Gastrocnemius medialis (tissue), 4 donors: ENCODE measurements at regions of chr6 and their contacts with region 1.

Region 1: GRCh38 chr6:27893059-27893835 is 18.9 kb downstream of the OR2B2 start:
- DNase-seq: peak in 1 of 2 donors; percentile 56
- ATAC-seq: peak; percentile 47 to 62
- H3K4me3 ChIP-seq: peak overlapping the region; percentile 66 to 77 (median 70)
- H3K27ac ChIP-seq: peak overlapping the region in 3 of 4 donors; percentile 36 to 52 (median 49)
- H3K4me1 ChIP-seq: peaks cover 15 to 32% of the 10 kb centered on the region in 2 donors
- H3K27me3 ChIP-seq: peaks cover 47 to 56% (median 48%) of the 10 kb centered on the region in 3 donors
- CTCF ChIP-seq: no peak
- POLR2A ChIP-seq: peak; percentile 45 to 65

Region 2: DNA sequence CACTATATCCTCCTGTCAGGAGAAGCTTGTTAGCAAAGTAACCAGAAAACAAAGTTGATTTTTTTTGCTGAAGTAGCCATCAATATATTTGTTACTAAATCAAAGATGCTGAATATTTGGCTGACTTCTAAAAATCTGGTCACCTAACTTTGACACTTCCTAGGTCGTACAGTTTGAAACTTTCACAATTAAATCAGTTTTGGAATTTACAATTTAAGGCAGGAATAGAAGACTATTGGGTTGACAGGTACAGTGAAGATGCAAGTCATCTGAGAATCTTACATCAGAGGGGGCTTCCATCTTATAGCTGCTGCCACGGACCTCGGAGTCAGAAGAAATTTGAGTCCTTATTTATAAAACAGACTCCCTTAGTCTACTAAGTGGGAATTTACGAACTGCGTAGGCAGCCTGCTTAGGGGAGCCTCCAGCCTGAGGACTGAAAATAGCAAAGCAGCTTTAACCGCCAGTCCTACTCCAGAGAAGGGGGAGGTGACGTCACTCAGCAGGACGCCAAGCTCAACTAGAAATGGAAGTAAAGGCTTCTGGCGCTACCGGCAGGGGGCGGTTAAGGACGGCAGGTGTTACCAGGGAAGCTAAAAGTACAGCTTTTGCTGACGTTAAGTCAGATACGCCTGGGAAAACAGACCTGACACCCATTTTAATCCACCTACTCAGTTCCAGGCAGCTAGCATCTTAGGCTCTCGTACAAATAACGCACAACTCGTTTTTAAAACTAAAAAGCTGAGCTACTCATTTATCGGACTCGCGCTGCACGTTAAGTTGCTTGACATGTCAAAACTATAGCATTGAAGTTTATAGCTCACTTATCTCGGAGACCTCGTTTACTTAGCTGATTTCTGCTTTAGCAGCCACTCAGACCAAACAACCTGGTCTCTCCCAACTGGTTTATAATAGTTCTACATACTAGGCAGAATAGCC is 1867.1 kb before region 1 on chr6:
- in situ Hi-C with region 1: no loop called
- intact Hi-C with region 1: loop called (anchors 10 kb)
- DNase-seq: peak; percentile 86 to 87
- ATAC-seq: peak; percentile 60 to 72
- H3K4me3 ChIP-seq: peak overlapping the region; percentile 46 to 65 (median 62)
- H3K27ac ChIP-seq: peak overlapping the region; percentile 80 to 88 (median 83)
- H3K4me1 ChIP-seq: peaks cover 0 to 15% of the 10 kb centered on the region in 2 donors
- H3K27me3 ChIP-seq: peaks cover 7 to 67% (median 13%) of the 10 kb centered on the region in 3 donors
- CTCF ChIP-seq: peak; percentile 50 to 75 (median 73)
- POLR2A ChIP-seq: peak; percentile 7

Region 3: GRCh38 chr6:27177485-27178406 is 715.5 kb before region 1 on chr6:
- in situ Hi-C with region 1: loop called in 2 of 4 experiments (anchors 10 to 25 kb)
- intact Hi-C with region 1: loop called (anchors 5 kb)
- DNase-seq: peak; percentile 29 to 55
- ATAC-seq: peak; percentile 68 to 74
- H3K4me3 ChIP-seq: peak overlapping the region; percentile 81 to 92 (median 84)
- H3K27ac ChIP-seq: peak overlapping the region; percentile 55 to 72 (median 62)
- H3K4me1 ChIP-seq: peaks cover 5% of the 10 kb centered on the region in 2 donors
- H3K27me3 ChIP-seq: peaks cover 0 to 2% (median 0%) of the 10 kb centered on the region in 3 donors
- CTCF ChIP-seq: peak in 2 of 5 experiments; percentile 30 to 48
- POLR2A ChIP-seq: peak in 1 of 2 donors; percentile 18

Region 4: DNA sequence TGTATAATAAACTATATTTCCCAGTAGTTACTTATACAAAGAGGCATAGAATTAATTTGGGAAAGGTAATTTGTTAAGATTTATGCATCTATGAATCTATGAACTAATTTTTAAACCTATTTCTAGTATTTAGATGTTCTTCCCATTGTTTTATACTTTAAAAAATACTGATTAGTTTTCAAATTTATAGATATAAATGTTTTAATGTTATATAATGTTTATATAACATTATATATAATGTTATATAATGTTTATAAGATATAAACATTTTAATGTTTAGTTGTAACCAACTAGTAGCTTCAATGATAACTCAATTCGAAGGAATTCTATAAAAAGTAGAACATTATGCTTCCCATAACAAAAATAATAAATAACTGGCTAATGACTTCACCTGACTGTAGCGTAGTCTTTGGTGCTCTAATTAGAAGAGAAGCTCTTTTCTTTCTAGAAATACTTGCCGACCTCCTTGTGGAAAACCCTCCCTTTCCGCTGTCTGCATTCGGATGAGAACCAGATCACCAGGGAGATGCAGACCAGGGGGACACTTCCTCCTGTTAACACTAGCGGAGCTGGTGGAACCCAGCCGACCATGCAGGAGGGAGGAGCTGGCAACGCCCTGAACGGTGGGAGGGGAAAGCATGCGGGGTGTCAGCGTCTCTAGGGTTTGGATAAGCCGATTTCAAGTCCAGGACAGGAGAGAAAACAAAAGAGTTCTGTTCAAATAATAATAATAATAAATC is 139.4 kb before region 1 on chr6:
- in situ Hi-C with region 1: loop called in 1 of 4 experiments (anchors 25 kb)
- intact Hi-C with region 1: loop called (anchors 5 kb)
- DNase-seq: peak in 1 of 2 donors; percentile 18
- ATAC-seq: no peak
- H3K4me3 ChIP-seq: peak overlapping the region; percentile 68 to 79 (median 73)
- H3K27ac ChIP-seq: no peak overlapping the region
- H3K4me1 ChIP-seq: no peaks in the 10 kb centered on the region
- H3K27me3 ChIP-seq: peaks cover 13 to 22% (median 21%) of the 10 kb centered on the region in 3 donors
- CTCF ChIP-seq: no peak
- POLR2A ChIP-seq: no peak

Region 5: GRCh38 chr6:27795697-27796494 is 97.4 kb before region 1 on chr6:
- in situ Hi-C with region 1: no loop called
- intact Hi-C with region 1: loop called (anchors 2 kb)
- DNase-seq: no peak
- ATAC-seq: peak; percentile 66 to 87
- H3K4me3 ChIP-seq: no peak overlapping the region
- H3K27ac ChIP-seq: no peak overlapping the region
- H3K4me1 ChIP-seq: peaks cover 5 to 14% of the 10 kb centered on the region in 2 donors
- H3K27me3 ChIP-seq: peaks cover 6 to 18% (median 12%) of the 10 kb centered on the region in 3 donors
- CTCF ChIP-seq: peak; percentile 51 to 76 (median 68)
- POLR2A ChIP-seq: no peak

Region 6: DNA sequence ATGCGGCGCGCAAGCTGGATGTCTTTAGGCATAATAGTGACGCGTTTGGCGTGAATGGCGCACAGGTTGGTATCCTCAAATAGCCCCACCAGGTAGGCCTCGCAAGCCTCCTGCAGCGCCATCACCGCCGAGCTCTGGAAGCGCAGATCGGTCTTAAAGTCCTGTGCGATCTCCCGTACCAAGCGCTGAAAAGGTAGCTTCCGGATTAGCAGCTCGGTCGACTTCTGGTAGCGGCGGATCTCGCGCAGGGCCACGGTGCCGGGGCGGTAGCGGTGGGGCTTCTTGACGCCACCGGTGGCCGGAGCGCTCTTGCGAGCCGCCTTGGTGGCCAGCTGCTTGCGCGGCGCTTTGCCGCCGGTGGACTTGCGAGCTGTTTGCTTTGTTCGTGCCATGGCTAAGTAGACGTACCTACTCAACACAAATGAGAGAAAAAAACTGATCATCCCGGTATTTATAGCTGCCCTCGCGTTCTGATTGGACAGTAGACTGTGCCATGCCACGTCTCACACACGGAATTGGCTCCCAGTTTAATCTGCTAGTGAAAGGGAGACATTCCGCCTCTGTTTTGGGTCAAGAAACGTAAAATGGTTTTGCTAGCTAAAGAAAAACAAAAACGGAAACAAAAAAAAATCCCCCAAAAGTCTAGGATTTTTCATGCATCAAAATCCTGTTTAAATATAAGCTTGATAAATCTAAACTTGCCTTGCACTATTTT is 21.2 kb before region 1 on chr6:
- in situ Hi-C with region 1: no loop called
- intact Hi-C with region 1: loop called (anchors 2 kb)
- DNase-seq: peak in 1 of 2 donors; percentile 45
- ATAC-seq: peak; percentile 73 to 76
- H3K4me3 ChIP-seq: peak overlapping the region; percentile 46 to 54 (median 50)
- H3K27ac ChIP-seq: peak overlapping the region in 2 of 4 donors; percentile 6 to 34
- H3K4me1 ChIP-seq: peaks cover 19 to 27% of the 10 kb centered on the region in 2 donors
- H3K27me3 ChIP-seq: peaks cover 74 to 84% (median 77%) of the 10 kb centered on the region in 3 donors
- CTCF ChIP-seq: no peak
- POLR2A ChIP-seq: peak; percentile 38 to 69

Region 7: GRCh38 chr6:28124102-28124970 is 231.1 kb after region 1 on chr6 and contains the start of gene ZSCAN16:
- in situ Hi-C with region 1: no loop called
- intact Hi-C with region 1: no loop called
- DNase-seq: peak; percentile 65 to 79
- ATAC-seq: peak; percentile 98 to 99
- H3K4me3 ChIP-seq: peak within 1 kb of the TSS; percentile 72 to 83 (median 77)
- H3K27ac ChIP-seq: peak within 1 kb of the TSS; percentile 71 to 81 (median 77)
- H3K4me1 ChIP-seq: peaks cover 13 to 14% of the 10 kb centered on the region in 2 donors
- H3K27me3 ChIP-seq: no peaks in the 10 kb centered on the region
- CTCF ChIP-seq: no peak
- POLR2A ChIP-seq: no peak
- total RNA-seq, gene ZSCAN16: 1.8 to 4.2 (median 3.4) TPM

Region 8: GRCh38 chr6:28161410-28162079 is 268.3 kb after region 1 on chr6:
- in situ Hi-C with region 1: no loop called
- intact Hi-C with region 1: no loop called
- DNase-seq: peak; percentile 18 to 66
- ATAC-seq: peak in 1 of 2 donors; percentile 86
- H3K4me3 ChIP-seq: peak overlapping the region; percentile 45 to 67 (median 62)
- H3K27ac ChIP-seq: peak overlapping the region in 1 of 4 donors; percentile 4
- H3K4me1 ChIP-seq: peaks cover 0 to 8% of the 10 kb centered on the region in 2 donors
- H3K27me3 ChIP-seq: no peaks in the 10 kb centered on the region
- CTCF ChIP-seq: no peak
- POLR2A ChIP-seq: no peak